AG04449 (cell line): ENCODE measurements at regions of chr1 and their contacts with region 1.

Region 1: DNA sequence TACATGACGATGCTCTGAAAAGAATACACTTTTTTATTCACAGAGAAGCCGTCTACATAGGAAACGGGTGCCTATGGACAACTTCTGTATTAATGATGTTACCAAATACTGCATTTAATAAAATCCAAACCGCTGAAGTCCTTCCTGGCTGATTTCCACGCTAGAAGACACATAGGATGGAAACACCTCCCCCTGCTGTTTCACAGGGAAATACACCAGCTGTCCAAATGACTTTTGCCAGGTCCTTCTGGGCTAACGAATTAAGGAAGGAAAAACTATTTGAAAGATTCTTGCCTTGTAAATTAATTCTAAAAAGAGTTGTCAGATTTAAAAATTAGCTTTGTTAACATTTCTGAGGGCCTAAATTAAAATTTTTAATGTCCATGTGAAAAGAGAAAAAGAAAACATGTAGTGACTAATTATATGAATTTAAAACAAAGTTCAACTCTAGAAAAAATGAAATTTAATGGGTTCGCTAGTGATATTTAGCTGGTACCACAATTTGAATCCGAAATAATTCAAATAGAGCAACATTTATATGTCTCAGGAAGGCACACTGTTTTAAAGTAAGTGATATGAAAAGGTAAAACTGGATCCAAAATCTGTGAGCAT is 146.0 kb downstream of the RERE start:
- DNase-seq: no peak
- H3K4me3 ChIP-seq: no peak overlapping the region
- CTCF ChIP-seq: peak; percentile 75

Region 2: DNA sequence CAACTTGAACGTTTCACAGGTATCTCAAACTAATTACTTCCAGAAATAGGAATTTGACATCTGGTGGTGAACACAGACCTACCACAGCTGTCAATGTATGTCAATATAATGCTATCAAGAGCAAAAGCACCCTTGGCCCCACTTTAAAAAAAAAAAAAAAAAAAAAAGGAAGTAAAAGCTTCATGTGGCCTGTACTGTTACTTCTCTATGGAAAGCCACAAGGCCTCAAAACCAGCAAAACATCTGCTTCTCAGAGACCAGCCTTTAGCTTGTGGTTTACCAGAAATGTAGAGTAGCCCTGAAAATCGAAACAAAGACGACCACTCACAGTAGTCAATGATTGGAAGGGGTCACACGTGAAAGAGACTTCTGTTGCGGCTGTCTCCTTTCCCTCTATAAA is 243.9 kb before region 1 on chr1:
- CTCF ChIA-PET with region 1: no interaction called
- POLR2A ChIA-PET with region 1: no interaction called
- DNase-seq: no peak
- H3K4me3 ChIP-seq: no peak overlapping the region
- CTCF ChIP-seq: no peak

Region 3: DNA sequence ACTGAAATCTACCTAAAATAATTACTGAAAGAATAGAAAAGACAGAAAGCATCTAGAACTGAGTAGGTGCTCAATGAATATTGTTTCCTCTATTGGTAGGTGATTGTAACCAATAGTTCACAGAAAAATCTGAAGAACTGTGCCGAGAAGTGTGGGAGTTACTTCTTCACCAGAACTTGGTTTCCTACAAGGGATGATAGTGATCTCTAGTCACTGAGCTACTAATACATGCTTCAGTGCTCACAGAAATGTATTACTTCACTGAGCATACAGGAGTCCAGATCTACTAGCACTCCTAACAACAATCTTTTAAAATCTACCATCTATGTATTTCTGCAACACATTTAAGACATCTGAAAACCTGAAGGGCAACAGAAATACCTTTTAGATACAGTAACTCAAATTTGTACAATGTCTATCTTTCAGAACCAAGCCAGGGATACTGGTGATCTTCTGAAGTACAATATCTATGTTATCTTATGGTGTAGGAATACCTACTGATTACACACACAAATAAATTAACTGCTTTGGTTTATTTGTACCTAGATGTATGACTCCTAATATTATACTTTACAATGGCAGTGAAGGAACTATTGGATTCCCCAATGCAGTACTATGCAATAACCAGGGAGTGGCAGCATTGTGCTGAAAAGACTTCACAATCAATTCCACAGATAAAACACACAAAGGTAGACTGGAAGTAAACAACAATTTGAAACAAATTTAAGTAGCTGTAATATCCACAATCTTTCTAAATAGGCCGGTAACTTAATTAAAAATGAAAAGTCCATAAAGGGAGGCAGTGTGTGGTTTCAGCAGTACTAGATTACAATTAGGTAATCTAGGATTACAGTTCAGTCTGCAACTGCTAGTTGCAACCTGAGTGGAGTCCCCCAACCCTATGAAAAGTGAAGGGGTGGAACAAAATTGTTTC is 110.5 kb before region 1 on chr1:
- CTCF ChIA-PET with region 1: interaction called, 60 read pairs
- POLR2A ChIA-PET with region 1: no interaction called
- DNase-seq: no peak
- H3K4me3 ChIP-seq: no peak overlapping the region
- CTCF ChIP-seq: peak; percentile 71

Region 4: DNA sequence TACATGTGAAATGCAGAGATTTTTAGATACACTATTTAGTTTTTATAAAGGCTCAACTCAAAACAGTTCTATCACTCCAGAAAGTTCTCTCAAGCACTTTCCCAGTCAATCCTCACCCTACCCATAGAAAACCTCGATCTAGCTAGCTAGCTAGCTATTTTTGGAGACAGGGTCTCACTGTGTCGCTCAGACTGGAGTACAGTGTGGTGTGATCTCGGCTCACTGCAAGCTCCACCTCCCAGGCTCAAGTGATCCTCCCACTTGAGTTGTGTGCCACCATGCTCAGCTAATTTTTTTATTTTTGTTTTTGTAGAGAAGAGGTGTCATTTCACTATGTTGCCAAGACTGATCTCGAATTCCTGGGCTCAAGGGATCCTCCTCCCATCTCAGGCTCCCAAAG is 90.8 kb before region 1 on chr1:
- CTCF ChIA-PET with region 1: interaction called, 10 read pairs
- POLR2A ChIA-PET with region 1: no interaction called
- DNase-seq: no peak
- H3K4me3 ChIP-seq: no peak overlapping the region
- CTCF ChIP-seq: no peak

Region 5: DNA sequence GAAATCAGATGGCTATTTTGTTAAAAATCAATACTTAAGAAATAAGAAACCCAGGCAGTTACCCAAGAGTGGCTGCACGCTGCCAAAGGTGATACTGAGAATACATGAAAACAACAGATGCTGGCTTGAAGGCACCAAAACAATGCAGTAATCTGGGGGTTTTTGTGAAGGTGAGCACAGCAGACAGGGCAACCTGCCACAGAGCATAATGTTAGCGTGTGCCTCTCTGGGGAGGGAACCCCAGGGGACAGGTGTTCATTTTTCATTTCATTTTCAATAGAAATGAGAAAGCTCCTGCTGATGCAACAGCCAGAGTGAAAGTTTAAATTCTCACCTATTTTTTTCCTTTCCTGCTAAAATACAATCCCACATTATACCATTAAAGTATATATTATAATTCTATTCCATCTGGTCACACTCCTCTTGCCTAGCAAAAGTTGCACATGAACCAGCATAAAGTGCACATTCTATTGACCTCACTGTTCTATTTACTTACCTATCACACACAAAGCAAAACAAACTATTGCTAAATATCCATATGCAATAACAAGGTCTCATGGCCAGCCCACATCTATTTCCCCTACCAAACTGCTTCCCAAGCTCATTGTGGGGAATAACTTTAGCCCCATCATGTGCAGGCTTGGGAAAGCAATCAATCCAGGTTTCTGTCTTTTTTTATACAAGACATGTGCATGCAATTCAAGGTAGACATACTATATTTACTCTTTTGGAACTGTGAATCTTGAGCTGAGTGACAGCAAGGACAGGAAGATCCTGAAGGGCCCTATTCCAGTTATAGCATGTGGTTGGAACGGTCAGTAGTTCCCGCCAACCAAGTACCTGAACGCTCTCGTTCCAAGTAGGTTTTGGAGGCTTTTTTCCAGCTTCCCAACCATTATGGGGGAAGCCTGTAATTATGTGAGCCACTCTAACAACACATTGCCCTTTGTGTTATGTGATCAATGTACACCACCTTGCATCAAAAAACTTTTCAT is 27.6 kb before region 1 on chr1:
- CTCF ChIA-PET with region 1: interaction called, 16 read pairs
- POLR2A ChIA-PET with region 1: no interaction called
- DNase-seq: no peak
- H3K4me3 ChIP-seq: no peak overlapping the region
- CTCF ChIP-seq: no peak

Region 6: DNA sequence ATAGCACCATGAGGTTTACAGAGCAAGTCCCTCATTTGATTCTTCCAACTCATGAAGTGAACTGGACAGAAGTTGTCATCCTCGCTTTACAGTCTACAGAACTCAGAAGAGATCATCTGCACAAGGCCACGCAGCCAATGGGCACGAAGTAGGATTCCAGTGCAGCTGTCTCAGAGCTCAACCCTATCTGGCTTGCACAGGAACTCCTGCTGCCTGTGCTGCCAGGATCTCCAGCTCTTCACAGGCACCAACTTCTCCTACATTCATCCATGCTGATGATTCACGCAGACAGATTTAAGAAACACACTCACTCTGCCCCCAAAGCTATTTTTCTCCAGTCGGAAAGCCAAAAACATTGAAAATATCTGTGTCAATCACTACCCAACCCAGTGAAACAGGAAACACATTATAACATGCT is 11.0 kb before region 1 on chr1:
- CTCF ChIA-PET with region 1: interaction called, 69 read pairs
- POLR2A ChIA-PET with region 1: no interaction called
- DNase-seq: peak; percentile 81
- H3K4me3 ChIP-seq: peak overlapping the region; percentile 21; the same call in 1 of the 2 replicates
- CTCF ChIP-seq: no peak

Region 7: DNA sequence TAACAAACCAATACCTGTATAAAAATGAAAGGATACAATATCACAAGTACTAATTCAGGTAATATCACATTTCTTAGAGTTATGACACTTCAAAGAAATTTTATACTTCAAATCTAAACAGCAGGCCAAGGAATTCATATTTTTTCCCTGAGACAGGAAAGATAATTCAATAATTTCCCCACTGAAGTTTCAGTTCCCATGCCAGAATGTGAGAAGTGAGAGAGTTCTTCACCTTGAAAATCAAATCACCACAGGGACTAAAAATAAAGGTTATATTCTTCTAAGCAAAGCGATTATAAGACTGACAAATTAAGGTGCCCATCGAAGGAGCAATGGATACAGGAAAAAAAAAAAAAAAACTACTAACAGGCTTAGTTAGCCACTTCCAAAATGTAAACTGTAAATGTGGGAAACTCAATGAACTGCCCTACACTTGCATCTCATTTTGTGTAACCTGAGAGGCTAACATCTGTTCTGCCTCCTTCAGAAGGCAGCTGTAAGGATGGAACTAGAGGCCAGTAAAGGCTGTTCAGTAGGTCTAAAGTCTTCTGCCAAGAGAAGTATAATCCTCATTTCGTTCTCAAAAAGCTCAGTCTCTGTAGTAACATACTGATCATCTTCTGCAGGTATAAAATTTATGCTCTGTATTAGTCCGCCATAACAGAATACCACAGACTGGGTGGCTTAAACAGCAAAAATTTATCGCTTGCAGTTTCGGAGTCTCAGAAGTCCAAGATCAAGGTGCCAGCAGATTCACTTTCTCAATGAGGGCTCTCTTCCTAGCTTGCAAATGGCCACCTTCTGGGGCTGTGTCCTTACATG is 18.2 kb after region 1 on chr1:
- CTCF ChIA-PET with region 1: interaction called, 10 read pairs
- POLR2A ChIA-PET with region 1: no interaction called
- DNase-seq: no peak
- H3K4me3 ChIP-seq: no peak overlapping the region
- CTCF ChIP-seq: no peak

Region 8: DNA sequence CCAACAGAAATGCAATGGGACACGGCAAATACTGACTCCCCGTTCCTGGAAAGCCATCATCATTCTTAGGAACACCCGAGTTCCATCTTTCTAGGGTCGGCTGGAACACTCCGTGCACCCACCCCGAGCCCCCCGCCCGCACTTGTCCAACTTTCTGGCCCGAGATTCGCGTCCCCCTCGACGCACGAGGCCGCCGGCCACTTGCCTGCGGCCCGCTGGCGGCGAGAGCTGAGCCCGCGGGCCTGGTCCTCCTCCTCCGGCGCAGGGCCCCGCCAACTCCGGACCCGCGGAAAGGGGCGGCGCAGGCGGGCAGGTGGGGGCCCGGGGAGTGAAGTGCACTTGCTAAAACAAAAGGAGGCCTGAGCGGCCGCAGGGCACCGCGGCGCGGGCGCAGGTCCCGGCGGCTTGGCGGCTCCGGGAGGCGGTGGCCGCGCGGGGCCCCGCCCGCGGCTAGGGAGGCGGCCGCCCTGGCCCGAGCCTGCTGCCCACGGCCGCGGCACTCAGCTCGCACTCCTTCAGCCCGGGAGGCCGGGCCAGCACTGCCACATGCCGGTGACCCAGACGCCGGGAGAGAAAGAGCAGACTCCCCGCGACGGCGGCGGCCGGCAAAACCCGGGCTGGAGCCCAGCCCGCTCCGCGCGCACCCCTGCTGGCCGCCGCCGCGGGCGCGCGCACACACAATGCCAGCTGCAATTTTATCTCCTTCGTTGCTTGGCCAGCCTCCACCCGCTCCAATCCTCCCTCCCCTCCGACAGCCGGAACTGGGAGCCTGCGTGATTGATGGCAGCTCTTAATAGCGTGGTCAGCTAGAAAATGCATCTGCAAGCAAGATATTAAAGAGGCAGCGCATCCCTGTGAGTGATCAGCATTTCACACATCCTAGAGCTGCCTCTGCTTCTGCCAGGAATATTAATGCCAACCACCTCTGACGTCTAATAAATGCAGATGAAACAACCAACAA is 31.7 kb after region 1 on chr1:
- CTCF ChIA-PET with region 1: interaction called, 13 read pairs
- POLR2A ChIA-PET with region 1: no interaction called
- DNase-seq: no peak
- H3K4me3 ChIP-seq: peak overlapping the region; percentile 59
- CTCF ChIP-seq: peak; percentile 24

Region 9: GRCh38 chr1:9037476-9038337 is 366.3 kb after region 1 on chr1:
- CTCF ChIA-PET with region 1: no interaction called
- POLR2A ChIA-PET with region 1: no interaction called
- DNase-seq: no peak
- H3K4me3 ChIP-seq: no peak overlapping the region
- CTCF ChIP-seq: no peak